K562 (cell line): ENCODE measurements at regions of chr10 and their contacts with region 1.

Region 1: DNA sequence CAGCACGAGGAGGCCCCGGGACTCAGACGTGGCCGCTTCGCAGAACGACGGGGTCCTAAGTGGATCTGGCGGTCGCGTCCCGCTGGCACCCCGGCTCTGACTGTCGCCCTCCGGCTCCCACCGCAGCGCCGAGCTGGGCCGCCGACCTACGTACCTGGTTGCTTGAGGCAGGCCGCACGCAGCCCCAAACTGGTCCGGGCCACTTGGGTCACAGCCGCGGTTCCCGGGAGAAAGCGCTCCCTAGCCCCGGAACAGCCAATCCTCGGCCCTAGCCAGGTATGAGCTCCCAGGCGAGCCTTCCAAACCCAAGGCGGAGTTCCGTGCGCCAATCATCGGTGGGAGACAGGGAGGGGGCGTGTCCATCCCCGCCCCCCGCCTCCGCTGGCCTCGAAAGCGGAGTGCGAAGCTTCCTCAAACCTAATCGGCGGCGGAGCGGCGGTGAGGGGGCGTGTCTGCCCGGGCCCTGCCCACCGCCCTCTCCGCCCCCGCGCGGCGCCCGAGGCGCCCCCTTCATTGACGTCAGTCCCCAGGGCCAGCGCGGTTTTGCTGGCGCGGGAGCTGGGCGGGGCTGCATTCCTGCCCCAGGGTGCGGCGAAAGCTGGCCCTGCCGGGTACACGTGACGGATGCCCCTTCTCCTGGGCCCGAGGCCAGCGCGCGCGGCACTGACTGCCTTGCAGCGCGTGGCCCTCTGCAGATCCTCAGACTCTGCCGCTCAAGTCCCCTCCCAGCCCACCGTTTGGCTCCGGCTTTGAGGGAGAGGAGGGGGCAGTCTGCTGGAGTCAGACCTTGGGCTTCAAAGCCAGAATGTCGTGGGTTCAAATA is at the start of gene AVPI1:
- DNase-seq: peak; percentile 92 to 96 (median 93)
- ATAC-seq: peak; percentile 93
- H3K4me3 ChIP-seq: peak within 1 kb of the TSS; percentile 56
- H3K27ac ChIP-seq: peak within 1 kb of the TSS; percentile 97
- H3K4me1 ChIP-seq: peaks cover 41 to 52% of the 10 kb centered on the region in 2 experiments; a peak in 4 of 5 replicates
- H3K27me3 ChIP-seq: no peaks in the 10 kb centered on the region
- CTCF ChIP-seq: no peak
- EP300 ChIP-seq: no peak
- POLR2A ChIP-seq: peak; percentile 79
- RAD21 ChIP-seq: no peak
- polyA plus RNA-seq, gene AVPI1: 0.90 to 1.9 TPM

Region 2: GRCh38 chr10:97572214-97572989 is 114.8 kb before region 1 on chr10 and contains the start of gene ANKRD2:
- CTCF ChIA-PET with region 1: no interaction called
- POLR2A ChIA-PET with region 1: no interaction called
- in situ Hi-C with region 1: no loop called
- intact Hi-C with region 1: loop called (anchors 10 kb)
- DNase-seq: peak; percentile 63 to 79 (median 70)
- ATAC-seq: peak; percentile 97
- H3K4me3 ChIP-seq: no peak within 1 kb of the TSS
- H3K27ac ChIP-seq: no peak within 1 kb of the TSS
- H3K4me1 ChIP-seq: peaks cover 2 to 13% of the 10 kb centered on the region in 2 experiments; a peak in 4 of 5 replicates
- H3K27me3 ChIP-seq: no peaks in the 10 kb centered on the region
- CTCF ChIP-seq: peak; percentile 82 to 88 (median 84)
- EP300 ChIP-seq: no peak
- POLR2A ChIP-seq: no peak
- RAD21 ChIP-seq: peak; percentile 75 to 86
- polyA plus RNA-seq, gene ANKRD2: not detected